ENCODE measurements at regions of chr2 and their contacts with region 1.

Region 1: GRCh38 chr2:50118905-50119702 is 912.8 kb downstream of the NRXN1 start:
- DNase-seq: no peak
- H3K4me3 ChIP-seq: no peak overlapping the region
- H3K27ac ChIP-seq: peak overlapping the region in 1 of 2 donors; percentile 34
- H3K4me1 ChIP-seq: no peaks in the 10 kb centered on the region
- H3K27me3 ChIP-seq: no peaks in the 10 kb centered on the region
- CTCF ChIP-seq: no peak
- POLR2A ChIP-seq: no peak

Region 2: DNA sequence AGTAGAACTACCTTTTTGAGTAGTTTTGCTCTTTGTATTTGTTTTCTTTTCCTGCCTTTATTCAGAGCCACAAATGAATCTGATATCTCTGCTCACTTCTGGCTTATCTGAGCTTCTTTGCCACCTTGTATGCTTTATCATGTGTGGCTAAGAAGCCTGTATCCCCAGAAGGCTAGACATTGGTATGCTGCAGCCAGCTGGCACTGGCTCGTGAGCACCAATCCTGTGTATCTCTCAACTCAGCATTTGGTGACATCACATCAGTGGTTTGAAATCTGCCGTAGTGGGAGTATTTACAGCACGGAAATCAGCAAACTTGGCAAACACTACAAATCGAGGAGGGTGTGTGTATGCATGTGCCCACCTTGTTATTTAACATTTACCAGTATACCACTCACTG is 1179.9 kb before region 1 on chr2:
- intact Hi-C with region 1: loop called (anchors 5 kb)
- DNase-seq: no peak
- H3K4me3 ChIP-seq: no peak overlapping the region
- H3K27ac ChIP-seq: no peak overlapping the region
- H3K4me1 ChIP-seq: no peaks in the 10 kb centered on the region
- H3K27me3 ChIP-seq: no peaks in the 10 kb centered on the region
- CTCF ChIP-seq: no peak
- POLR2A ChIP-seq: no peak

Region 3: DNA sequence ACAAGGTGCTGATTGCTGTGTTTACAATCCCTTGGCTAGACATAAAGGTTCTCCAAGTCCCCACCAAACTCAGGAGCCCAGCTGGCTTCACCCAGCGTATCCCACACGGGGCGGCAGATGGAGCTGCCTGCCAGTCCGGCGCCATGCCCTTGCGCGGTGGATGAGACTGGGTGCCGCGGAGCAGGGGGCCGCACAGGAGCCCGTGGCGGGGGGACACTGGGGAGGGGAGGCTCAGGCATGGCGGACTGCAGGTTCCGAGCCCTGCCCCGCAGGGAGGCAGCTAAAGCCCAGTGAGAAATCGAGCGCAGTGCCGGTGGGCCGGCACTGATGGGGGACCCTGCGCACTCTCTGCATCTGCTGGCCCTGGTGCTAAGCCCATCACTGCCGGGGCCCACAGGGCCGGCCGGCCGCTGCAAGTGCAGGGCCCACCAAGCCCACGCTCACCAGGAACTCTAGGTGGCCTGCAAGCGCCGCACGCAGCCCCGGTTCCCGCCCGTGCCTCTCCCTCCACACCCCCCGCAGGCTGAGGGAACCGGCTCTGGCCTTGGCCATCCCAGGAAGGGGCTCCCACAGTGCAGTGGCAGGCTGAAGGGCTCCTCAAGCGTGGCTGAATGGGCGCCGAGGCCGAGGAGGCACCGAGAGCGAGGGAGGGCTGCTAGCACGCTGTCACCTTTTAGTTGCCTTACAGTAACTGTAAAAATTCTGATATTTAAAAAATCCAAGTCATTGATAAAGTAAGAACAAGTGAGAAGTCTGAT is 34.8 kb before region 1 on chr2:
- intact Hi-C with region 1: no loop called
- DNase-seq: no peak
- H3K4me3 ChIP-seq: no peak overlapping the region
- H3K27ac ChIP-seq: no peak overlapping the region
- H3K4me1 ChIP-seq: no peaks in the 10 kb centered on the region
- H3K27me3 ChIP-seq: no peaks in the 10 kb centered on the region
- CTCF ChIP-seq: no peak
- POLR2A ChIP-seq: no peak

Region 4: GRCh38 chr2:50284188-50284587 is 165.1 kb after region 1 on chr2:
- intact Hi-C with region 1: no loop called
- DNase-seq: no peak
- H3K4me3 ChIP-seq: no peak overlapping the region
- H3K27ac ChIP-seq: no peak overlapping the region
- H3K4me1 ChIP-seq: no peaks in the 10 kb centered on the region
- H3K27me3 ChIP-seq: no peaks in the 10 kb centered on the region
- CTCF ChIP-seq: no peak
- POLR2A ChIP-seq: no peak

Measured in breast epithelium (tissue), 4 donors.